PC-3 (cell line): ENCODE measurements at regions of chr10 and their contacts with region 1.

Region 1: DNA sequence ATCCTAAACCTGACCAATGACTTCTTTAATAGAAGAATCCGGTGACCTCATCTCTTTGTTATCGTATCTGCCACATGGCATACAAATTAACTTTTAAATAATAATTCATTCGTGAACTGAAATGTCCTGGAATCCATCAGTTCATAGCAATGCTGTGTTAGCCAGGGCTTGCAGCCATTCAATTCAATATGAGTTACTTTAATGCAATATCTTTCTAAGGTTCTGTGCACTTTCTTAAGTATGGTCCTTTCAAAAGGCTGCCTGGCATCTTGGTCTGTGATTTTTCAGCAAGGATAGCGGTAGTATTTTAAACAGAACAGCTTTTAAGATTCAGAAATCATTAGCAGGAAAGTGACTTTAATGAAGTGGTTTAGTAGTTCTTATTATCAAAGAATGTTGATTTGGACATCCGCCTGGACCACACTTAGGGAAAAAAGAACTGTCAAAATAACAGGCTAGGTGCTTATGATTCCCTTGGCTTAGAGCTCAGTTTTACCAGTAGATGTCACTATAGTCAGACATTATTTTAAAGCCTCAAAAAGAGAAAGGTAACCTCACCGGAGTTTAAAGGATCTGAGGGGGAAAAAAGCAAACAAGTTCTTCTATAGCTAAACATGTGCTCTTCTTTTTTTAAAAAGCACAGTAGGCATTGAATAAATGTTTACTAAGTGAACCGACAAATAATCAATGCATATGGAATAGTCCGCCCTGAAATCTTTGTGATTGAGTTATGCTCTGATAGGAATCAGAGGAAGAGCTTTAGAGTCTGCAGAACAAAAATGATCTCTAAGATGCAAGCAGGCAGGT is 22.7 kb downstream of the SLC35G1 start:
- DNase-seq: peak; percentile 71
- ATAC-seq: peak; percentile 77
- H3K4me3 ChIP-seq: no peak overlapping the region
- H3K27ac ChIP-seq: no peak overlapping the region
- H3K4me1 ChIP-seq: no peaks in the 10 kb centered on the region
- H3K27me3 ChIP-seq: no peaks in the 10 kb centered on the region
- CTCF ChIP-seq: peak; percentile 77

Region 2: DNA sequence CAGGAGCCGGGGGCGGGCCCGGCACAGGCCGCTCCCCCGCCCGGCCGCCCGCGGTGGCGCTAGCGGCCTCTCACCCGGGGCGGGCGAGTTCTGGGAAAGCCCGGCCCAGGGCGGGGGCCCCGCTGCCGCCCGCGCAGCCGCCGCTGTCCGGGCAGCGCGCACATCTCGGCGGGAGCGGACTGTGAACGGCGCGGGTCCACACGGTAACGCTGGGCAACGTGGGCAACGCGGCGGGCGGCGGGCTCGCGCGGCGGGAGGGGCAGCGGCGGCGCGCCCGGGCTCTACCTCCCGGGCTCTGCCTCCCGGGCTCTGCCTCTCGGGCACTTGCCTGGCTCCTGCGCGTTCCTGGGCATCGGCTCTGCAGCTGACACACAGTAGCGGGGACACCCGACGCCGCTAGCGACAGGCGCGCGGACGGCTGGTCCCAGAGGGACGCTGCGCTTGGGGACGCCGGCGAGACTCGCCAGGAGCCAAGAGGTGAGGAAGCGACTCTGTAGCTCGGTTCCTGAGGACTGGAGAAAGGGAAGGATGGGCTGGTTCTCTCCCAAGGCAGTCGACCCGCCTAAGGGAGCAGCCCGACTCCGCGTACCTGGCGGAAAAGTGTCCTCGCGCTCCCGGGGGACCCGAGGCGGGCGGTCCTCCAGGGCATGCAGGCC is 77.5 kb after region 1 on chr10 and contains the start of gene PLCE1:
- CTCF ChIA-PET with region 1: interaction called, 8 read pairs
- POLR2A ChIA-PET with region 1: interaction called, 3 read pairs
- intact Hi-C with region 1: loop called (anchors 5 kb)
- DNase-seq: peak; percentile 69
- ATAC-seq: peak; percentile 66
- H3K4me3 ChIP-seq: peak within 1 kb of the TSS; percentile 88
- H3K27ac ChIP-seq: peak within 1 kb of the TSS; percentile 13
- H3K4me1 ChIP-seq: peaks cover 48% of the 10 kb centered on the region
- H3K27me3 ChIP-seq: no peaks in the 10 kb centered on the region
- CTCF ChIP-seq: no peak
- total RNA-seq, gene PLCE1: 9.2 and 11.4 TPM in 2 replicates

Region 3: DNA sequence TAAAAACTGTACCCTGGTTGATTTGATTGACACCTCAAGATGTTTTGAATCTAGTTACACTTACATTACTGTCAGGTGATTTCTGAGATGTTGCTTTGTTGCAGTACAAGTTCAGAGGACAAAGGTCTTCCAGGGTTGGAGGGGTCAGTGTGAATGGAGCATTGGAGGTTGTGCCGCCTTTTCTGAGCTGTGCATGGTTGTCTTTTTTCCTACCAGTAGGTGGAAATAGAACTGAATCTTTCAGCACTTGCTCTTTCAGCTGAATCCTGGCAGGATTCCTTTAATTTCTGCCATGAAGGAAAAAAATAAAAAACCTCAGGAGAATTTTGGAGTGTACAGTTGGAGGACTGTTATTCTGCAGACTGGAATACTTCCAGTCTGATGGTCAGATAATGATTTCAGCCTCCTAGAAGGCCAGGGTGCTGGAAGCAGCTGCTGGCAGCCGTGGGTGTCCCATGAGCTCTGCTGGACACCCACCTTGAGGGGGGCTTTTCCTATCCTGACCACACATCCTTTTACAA is 159.9 kb after region 1 on chr10:
- CTCF ChIA-PET with region 1: interaction called, 3 read pairs
- POLR2A ChIA-PET with region 1: no interaction called
- intact Hi-C with region 1: loop called (anchors 2 kb)
- DNase-seq: peak; percentile 33
- ATAC-seq: peak; percentile 53
- H3K4me3 ChIP-seq: no peak overlapping the region
- H3K27ac ChIP-seq: no peak overlapping the region
- H3K4me1 ChIP-seq: no peaks in the 10 kb centered on the region
- H3K27me3 ChIP-seq: no peaks in the 10 kb centered on the region
- CTCF ChIP-seq: peak; percentile 49; the same call in 1 of the 2 replicates

Region 4: GRCh38 chr10:94225589-94225988 is 309.1 kb after region 1 on chr10:
- CTCF ChIA-PET with region 1: no interaction called
- POLR2A ChIA-PET with region 1: no interaction called
- intact Hi-C with region 1: loop called (anchors 10 kb)
- DNase-seq: peak; percentile 3
- ATAC-seq: no peak
- H3K4me3 ChIP-seq: no peak overlapping the region
- H3K27ac ChIP-seq: no peak overlapping the region
- H3K4me1 ChIP-seq: peaks cover 14% of the 10 kb centered on the region; the same call in 1 of the 2 replicates
- H3K27me3 ChIP-seq: no peaks in the 10 kb centered on the region
- CTCF ChIP-seq: peak; percentile 43

Region 5: DNA sequence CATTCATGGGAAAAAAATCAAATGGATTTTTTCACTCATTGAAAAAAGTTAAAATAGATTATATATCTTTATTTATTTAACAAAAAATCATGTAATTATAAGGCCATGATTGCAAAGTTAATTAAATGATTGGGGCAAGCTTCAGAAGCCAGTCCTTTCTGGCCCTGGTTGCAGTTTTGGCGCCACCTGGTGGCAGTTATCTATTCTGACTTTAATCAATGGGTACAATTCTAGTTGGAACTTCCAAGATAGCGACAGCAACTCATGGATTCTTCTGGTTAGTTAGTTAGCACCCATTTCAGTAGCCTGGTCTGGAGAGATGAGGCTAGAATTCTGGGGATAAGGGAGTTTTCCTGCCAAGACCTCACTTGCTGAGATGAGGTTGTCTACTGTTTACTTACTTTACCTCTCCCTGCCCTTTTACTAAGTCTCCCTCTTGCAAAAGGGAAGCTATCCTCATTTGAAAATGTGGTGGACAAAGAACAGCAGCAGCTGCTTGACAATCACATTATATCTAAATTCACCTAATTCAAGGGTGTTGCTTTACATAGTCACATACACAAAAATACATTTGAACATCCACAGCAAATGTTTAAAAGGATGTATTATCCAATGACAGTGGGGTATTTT is 403.9 kb after region 1 on chr10:
- CTCF ChIA-PET with region 1: interaction called, 10 read pairs
- POLR2A ChIA-PET with region 1: no interaction called
- intact Hi-C with region 1: loop called (anchors 1 kb)
- DNase-seq: peak; percentile 73
- ATAC-seq: peak; percentile 53
- H3K4me3 ChIP-seq: no peak overlapping the region
- H3K27ac ChIP-seq: no peak overlapping the region
- H3K4me1 ChIP-seq: no peaks in the 10 kb centered on the region
- H3K27me3 ChIP-seq: no peaks in the 10 kb centered on the region
- CTCF ChIP-seq: peak; percentile 69